ENCODE measurements at regions of chr6 and their contacts with region 1.

Region 1: GRCh38 chr6:158072083-158072721 is 90.5 kb downstream of the SYNJ2 start:
- DNase-seq: peak; percentile 74
- H3K4me3 Mint-ChIP-seq: no peak overlapping the region
- H3K27ac Mint-ChIP-seq: no peak overlapping the region
- H3K4me1 Mint-ChIP-seq: peaks cover 46% of the 10 kb centered on the region
- H3K27me3 Mint-ChIP-seq: no peaks in the 10 kb centered on the region

Region 2: DNA sequence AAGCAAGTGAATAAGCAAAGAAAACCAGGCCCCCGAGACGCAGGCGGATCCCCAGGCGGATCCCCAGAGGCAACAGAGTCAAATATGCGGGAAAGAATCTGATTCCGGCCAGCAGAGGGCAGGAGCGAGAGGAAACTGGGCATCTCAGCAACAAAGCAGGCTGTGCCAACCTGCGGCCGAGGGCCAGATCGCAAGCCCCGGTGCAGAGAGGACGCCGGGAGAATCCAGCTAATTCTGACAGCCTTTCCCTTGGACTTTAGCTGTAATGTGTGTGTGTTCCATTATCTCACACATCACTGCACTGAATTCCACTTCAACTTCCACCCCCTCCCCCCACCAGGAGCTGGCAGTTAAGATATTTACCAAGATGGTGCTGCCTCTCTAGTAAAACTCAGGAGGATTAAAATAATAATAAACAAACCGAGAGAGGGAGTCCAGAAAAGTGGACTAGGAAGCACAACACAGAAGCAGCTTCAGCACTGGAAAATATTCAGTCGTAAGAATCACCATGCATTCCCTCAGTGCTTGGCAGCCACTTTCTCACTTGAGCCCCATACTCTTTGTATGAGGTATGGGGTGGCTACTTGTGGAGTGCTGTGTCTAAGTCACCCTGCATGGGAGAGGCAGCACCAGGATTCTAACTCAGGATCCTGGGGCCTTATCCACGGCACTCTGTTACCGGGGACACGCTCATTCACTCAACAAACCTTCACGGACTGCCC is 315.3 kb before region 1 on chr6:
- CTCF ChIA-PET with region 1: interaction called, 21 read pairs
- POLR2A ChIA-PET with region 1: no interaction called
- DNase-seq: peak; percentile 84
- H3K4me3 Mint-ChIP-seq: no peak overlapping the region
- H3K27ac Mint-ChIP-seq: no peak overlapping the region
- H3K4me1 Mint-ChIP-seq: peaks cover 70% of the 10 kb centered on the region
- H3K27me3 Mint-ChIP-seq: peaks cover 46% of the 10 kb centered on the region

Region 3: DNA sequence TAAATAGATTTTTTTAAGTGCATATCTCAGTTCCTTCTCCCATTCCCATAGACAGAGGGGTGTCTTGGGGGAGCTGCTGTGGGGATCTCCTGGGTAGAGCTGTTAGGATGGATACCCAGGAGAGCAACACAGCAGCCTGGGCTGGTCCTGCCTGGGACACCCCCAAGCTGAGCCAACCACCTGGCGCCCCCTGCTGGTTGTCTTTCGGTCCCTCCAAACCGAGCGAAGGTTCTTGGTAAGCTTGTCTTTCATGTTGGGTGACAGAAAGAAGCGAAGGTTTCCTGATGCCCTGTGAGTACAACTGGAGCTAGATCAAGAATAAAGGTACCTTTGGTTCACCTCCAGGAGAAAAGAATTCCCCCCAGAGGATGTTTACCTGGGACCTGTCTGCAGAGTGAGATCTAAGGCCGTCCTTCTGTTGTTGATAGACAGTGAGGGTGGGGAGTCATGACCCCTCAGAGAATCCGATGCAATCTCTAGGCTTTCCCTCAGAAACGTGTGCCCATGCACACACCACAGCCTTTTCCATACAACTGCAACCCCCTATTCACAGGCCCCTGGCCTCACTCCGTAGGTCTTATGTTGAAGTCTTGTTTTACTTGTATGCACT is 198.4 kb before region 1 on chr6:
- CTCF ChIA-PET with region 1: interaction called, 16 read pairs
- POLR2A ChIA-PET with region 1: no interaction called
- DNase-seq: peak; percentile 87
- H3K4me3 Mint-ChIP-seq: no peak overlapping the region
- H3K27ac Mint-ChIP-seq: no peak overlapping the region
- H3K4me1 Mint-ChIP-seq: peaks cover 18% of the 10 kb centered on the region
- H3K27me3 Mint-ChIP-seq: no peaks in the 10 kb centered on the region

Region 4: GRCh38 chr6:157981395-157982296 is 90.6 kb before region 1 on chr6 and contains the start of gene SYNJ2:
- CTCF ChIA-PET with region 1: interaction called, 60 read pairs
- POLR2A ChIA-PET with region 1: interaction called, 8 read pairs
- DNase-seq: peak; percentile 90
- H3K4me3 Mint-ChIP-seq: peak within 1 kb of the TSS; percentile 96
- H3K27ac Mint-ChIP-seq: peak within 1 kb of the TSS; percentile 80
- H3K4me1 Mint-ChIP-seq: peaks cover 57% of the 10 kb centered on the region
- H3K27me3 Mint-ChIP-seq: peaks cover 8% of the 10 kb centered on the region
- total RNA-seq, gene SYNJ2: 36.8 to 39.1 TPM

Region 5: GRCh38 chr6:158047127-158047518 is 25.1 kb before region 1 on chr6:
- CTCF ChIA-PET with region 1: interaction called, 12 read pairs
- POLR2A ChIA-PET with region 1: interaction called, 3 read pairs
- DNase-seq: peak; percentile 63
- H3K4me3 Mint-ChIP-seq: no peak overlapping the region
- H3K27ac Mint-ChIP-seq: peak overlapping the region; percentile 49
- H3K4me1 Mint-ChIP-seq: peaks cover 23% of the 10 kb centered on the region
- H3K27me3 Mint-ChIP-seq: no peaks in the 10 kb centered on the region

Region 6: DNA sequence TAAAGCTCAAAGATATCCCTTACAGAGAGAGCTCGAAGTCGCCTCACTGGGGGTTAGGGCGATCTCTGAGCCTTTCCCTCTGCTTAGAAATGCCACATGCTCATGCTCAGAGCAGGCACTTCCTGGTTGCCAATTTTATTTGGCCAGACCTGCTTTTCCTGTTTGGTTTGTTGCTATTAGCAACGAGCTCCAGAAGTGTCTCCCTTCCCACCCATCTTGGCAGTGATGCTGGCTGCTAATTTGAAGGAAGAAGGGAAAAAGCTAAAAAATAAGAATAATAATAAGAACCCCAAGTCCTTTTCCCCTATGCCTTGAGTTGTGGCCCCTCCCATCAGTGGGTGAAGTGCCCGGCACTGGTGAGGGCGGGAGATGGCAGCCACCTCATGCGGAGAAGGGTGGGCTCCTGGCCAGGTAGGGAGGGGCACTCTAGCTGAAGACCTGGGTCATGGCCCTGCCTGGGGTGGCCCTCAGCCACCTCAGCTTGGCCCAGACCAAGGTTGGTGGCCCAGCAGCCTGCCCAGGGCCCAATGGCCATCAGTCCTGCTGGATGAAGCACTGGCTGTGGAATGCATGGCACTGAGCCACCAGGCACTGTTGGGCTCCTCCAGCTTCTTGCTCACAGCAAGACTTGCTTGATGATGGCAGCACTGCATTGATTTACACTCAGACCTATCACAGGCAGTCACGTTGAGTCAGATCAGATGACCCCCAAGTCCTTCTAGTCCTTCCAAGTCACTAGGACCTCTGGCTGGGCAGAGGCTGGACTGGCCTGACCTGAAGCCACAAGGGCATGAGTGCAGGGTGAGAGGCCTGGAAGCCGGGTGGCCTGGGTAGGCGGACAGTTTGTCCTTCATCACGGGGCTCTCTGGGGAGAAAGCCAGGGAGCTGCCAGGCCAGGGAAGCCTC is 11.5 kb before region 1 on chr6:
- CTCF ChIA-PET with region 1: interaction called, 19 read pairs
- POLR2A ChIA-PET with region 1: interaction called, 3 read pairs
- DNase-seq: no peak
- H3K4me3 Mint-ChIP-seq: no peak overlapping the region
- H3K27ac Mint-ChIP-seq: no peak overlapping the region
- H3K4me1 Mint-ChIP-seq: peaks cover 33% of the 10 kb centered on the region
- H3K27me3 Mint-ChIP-seq: no peaks in the 10 kb centered on the region

Region 7: GRCh38 chr6:158143700-158144099 is 71.5 kb after region 1 on chr6:
- CTCF ChIA-PET with region 1: no interaction called
- POLR2A ChIA-PET with region 1: no interaction called
- DNase-seq: no peak
- H3K4me3 Mint-ChIP-seq: no peak overlapping the region
- H3K27ac Mint-ChIP-seq: no peak overlapping the region
- H3K4me1 Mint-ChIP-seq: peaks cover 4% of the 10 kb centered on the region
- H3K27me3 Mint-ChIP-seq: no peaks in the 10 kb centered on the region

Measured in activated CD4-positive, alpha-beta memory T cell treated with anti-CD3 and anti-CD28 coated beads, Interleukin-2, amount 10 ng/mL, durations not matched to agents 7 days and 5 days (primary cell).